ENCODE measurements at regions of chr2 and their contacts with region 1.

Region 1: DNA sequence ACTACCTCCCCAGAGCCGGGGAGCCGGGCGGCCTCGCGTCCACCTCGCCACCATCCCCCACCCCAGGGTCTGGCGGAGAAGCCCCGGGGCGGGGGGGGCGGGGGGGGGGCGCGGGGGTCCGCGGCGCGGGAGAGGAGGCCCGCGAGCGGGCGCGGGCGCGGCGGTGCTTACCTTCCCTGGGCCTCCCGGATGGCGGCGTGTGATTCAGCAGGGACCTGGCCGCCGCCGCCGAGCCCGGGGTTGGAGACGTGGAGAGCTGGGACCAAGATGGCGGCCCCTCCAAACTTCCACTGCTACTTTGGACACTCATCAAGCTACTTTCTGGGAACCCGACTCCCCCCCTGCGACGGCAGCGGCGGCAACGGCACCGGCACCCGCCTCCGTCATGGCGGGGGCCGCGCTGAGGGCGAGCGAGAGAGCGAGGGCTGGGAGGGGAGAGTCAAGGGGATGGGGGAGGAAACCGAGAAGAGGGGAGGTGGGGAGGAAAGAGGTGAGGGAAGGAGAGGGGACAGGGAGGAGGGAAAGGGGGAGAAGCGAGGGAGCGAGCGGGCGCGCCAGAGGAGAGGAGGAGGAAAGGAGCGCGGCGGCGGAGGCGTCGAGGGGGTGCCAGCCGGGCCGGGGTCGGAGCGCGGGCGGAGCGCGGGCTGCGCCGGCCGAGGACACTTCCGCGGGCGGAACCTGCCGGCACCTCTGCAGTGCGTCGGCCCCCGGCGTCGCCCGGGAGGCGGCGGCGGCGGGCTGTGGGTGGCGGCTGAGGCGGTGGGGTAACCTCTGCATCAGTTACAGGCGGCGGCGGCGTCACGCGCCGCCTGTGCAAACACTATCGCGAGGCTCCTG is at the start of gene TLK1:
- DNase-seq: peak; percentile 87
- total RNA-seq, gene TLK1: 31.8 TPM

Region 2: DNA sequence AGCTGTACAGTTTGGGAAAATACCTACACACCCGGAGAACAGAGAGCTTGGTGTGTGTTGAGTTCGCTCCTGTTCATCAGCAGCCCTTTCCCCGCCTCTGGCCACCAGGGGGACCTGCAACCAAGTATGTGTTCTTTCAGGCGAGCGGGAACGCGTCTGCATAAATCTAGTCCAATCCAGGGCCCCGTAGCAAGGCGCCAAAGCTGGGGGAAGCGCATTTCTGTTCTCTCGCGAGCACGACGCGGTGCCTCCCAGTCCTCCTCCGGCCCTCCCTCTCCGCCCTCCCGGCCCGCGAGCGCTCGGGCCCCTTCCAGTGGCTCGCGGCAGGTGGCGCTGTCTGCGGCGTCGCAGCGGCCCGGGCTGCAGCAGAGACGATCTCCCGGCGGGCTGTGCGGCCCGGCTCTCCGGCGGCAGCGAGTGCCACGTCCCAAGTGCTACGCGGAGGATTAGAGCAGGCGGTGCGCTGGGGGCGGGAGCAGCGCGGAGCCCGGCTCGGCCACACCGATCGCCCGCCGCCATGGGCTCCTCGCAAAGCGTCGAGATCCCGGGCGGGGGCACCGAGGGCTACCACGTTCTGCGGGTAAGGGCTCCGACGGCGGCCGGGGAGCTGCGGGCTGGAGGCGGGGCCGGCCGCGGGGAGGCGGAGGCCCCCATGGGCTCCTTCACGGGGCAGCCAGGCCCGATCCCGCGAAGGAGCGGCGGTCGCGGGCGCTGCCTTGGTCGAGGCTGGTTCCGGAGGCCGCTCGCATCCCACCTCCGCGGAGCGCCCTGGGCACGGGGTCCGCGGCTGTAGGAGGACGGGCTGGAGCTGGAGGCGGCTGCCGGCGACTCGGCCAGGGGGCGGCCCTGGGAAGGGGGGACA is 231.3 kb before region 1 on chr2 and contains the start of gene GORASP2:
- intact Hi-C with region 1: loop called (anchors 2 kb)
- DNase-seq: peak; percentile 99
- total RNA-seq, gene GORASP2: 67.1 TPM

Region 3: GRCh38 chr2:170973492-170974303 is 186.6 kb before region 1 on chr2:
- intact Hi-C with region 1: loop called (anchors 1 kb)
- DNase-seq: peak; percentile 92

Region 4: GRCh38 chr2:171056307-171056706 is 104.0 kb before region 1 on chr2:
- intact Hi-C with region 1: no loop called
- DNase-seq: no peak

Region 5: DNA sequence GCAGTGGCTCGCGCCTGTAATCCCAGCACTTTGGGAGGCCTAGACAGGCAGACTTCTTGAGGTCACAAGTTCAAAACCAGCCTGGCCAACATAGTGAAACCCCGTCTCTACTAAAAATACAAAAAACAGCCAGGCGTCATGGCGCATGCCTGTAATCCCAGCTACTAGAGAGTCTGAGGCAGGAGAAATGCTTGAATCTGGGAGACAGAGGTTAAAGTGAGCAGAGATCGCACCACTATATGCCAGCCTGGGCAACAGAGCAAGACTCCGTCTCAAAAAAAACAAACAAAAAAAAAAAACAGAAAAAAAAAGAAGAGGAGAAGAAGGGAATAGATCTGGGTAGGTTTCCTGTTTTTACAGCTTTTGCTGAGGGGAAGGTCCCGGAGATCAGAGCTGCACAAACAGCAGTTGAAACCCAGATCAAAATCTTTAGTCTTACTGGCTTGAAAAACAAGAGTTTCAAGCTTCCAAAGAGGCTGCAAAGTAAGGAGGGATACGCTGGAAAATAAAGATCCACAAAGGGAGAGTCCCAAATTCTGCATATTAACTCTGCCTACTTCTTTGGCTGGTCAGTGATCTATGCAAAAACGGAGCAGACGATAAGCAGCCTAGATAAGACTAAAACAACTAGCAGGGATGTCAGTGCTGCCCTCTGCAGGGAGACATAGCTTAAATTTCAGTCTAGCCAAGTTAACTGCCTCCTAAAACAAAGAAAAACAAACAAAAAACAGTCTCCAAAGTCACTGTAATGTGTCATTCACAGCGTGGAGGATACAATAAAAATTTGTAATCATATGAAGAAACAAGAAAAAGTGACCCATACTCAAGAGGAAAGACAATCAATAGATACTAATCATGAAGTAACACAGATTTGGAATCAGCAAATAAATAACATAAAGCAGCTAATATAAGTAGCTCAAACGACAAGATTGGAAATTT is 73.7 kb before region 1 on chr2:
- intact Hi-C with region 1: loop called (anchors 5 kb)
- DNase-seq: no peak

Region 6: DNA sequence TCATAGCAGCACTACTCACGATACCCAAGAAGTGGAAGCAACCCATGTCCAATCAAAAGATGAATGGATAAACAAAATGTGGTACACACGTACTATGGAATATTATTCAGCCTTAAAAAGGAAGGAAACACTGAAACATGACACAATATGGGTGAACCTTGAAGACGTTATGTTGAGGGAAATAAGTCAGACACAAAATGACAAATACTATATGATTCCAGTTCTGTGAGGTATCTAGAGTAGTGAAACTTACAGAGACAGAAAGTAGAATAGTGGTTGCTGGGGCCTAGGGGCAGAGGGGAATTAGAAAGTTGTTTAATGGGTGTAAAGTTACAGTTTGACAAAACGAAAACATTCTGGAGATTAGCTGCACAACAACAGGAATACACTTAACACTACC is 24.3 kb before region 1 on chr2:
- intact Hi-C with region 1: no loop called
- DNase-seq: no peak

Region 7: DNA sequence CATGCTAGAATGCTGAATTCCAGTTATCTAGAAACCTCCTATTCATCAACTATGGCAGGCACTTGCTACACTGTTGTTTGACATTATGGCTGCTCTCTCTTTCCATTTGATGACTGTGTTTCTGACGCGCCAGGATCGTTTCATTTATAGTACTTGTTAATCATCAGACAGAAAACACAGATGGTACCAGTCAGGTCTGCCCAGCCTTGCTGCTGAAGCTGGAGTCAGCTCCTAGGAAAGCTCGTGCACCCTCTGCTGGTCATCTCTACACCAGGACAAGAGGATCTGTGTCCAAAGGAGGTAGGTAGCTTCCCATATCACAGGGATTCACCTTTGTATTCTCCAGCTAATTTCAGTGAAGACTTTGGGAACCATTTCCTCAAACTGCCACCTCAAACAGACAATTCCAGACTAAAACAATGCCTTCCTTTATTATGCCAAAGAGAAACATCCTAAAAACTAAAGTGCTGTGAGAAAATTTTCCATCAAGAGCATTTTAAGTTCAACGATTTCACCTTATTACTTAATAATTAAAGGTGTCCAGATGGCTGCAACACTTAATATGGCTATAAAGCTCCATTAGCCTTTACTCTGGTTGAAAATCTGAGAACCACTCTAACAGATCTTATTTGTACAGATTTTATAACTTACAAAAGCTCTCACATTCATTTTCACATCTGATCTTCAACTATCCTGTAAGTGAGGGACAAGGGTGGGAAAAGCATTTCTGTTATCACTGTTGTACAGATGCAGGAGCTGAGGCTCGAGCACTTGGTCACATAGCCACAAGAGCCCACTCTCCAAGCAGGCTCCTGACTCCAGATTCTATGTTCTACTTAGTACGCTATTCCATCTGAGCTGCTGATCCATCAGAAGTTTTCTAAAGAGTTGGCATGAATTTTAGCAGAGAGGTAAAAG is 255.9 kb after region 1 on chr2:
- intact Hi-C with region 1: loop called (anchors 2 kb)
- DNase-seq: peak; percentile 88

Region 8: DNA sequence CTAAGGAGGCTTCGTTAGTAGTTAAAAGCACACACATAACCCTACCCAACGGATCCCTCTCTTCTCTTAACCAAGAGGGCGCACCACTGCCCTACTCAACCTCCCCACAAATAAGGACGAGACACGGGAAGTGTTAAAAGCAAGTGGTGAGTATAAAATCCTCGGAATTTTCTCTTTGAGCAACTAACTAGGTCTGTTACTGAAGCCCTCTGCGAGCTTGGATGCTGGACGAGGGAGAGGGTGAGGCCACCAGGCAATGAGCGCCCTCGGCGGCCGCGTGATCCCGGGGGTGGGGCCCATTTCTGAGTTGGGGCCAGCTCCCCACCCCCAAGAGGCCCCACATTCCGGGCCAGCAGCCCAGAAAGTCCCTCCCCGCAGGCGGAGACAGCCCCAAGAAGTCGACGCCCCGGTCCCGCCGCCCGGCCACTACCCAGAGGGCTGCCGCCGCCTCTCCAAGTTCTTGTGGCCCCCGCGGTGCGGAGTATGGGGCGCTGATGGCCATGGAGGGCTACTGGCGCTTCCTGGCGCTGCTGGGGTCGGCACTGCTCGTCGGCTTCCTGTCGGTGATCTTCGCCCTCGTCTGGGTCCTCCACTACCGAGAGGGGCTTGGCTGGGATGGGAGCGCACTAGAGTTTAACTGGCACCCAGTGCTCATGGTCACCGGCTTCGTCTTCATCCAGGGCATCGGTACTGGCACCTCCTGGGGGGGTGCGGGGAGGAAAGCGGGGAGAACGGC is 361.9 kb after region 1 on chr2 and contains the start of gene CYBRD1:
- intact Hi-C with region 1: loop called (anchors 2 kb)
- DNase-seq: peak; percentile 91
- total RNA-seq, gene CYBRD1: 39.7 TPM